ENCODE measurements at regions of chr19 and their contacts with region 1.

Region 1: GRCh38 chr19:7137120-7137519 is 67.6 kb downstream of the ZNF557 start:
- DNase-seq: no peak
- H3K4me3 ChIP-seq: no peak overlapping the region
- CTCF ChIP-seq: no peak

Region 2: DNA sequence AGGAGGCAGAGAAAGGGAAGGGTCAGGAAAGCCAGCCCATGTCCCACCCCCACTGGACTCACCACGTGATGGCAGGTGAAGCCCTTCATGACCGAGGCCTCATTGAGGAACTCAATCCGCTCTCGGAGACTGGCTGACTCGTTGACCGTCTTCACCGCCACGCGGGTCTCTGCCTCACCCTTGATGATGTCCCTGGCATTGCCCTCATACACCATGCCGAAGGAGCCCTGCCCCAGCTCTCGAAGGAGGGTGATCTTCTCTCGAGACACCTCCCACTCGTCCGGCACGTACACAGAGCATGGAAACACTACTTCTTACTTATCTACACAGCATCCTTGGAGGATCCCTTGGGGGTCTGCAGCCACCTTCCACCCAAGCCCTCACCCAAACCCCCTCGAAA is 11.9 kb before region 1 on chr19:
- CTCF ChIA-PET with region 1: no interaction called
- POLR2A ChIA-PET with region 1: no interaction called
- DNase-seq: no peak
- H3K4me3 ChIP-seq: no peak overlapping the region
- CTCF ChIP-seq: no peak

Region 3: GRCh38 chr19:7152568-7152967 is 15.4 kb after region 1 on chr19:
- CTCF ChIA-PET with region 1: interaction called, 17 read pairs
- POLR2A ChIA-PET with region 1: no interaction called
- DNase-seq: no peak
- H3K4me3 ChIP-seq: no peak overlapping the region
- CTCF ChIP-seq: no peak

Measured in AG04449 (cell line).